ENCODE measurements at regions of chr15 and their contacts with region 1.

Region 1: GRCh38 chr15:40253167-40253790 is 14.4 kb downstream of the PAK6 start:
- DNase-seq: no peak
- ATAC-seq: no peak
- H3K4me3 ChIP-seq: peak overlapping the region; percentile 48 to 52
- H3K27ac ChIP-seq: peak overlapping the region; percentile 41; the same call in 1 of the 2 replicates
- H3K4me1 ChIP-seq: peaks cover 28% of the 10 kb centered on the region
- H3K27me3 ChIP-seq: no peaks in the 10 kb centered on the region; the same call in 1 of the 2 replicates
- CTCF ChIP-seq: no peak

Region 2: GRCh38 chr15:40069178-40070165 is 183.8 kb before region 1 on chr15:
- CTCF ChIA-PET with region 1: no interaction called
- POLR2A ChIA-PET with region 1: no interaction called
- in situ Hi-C with region 1: no loop called
- intact Hi-C with region 1: no loop called
- DNase-seq: peak; percentile 71
- ATAC-seq: peak; percentile 92
- H3K4me3 ChIP-seq: peak overlapping the region in 1 of 2 experiments; percentile 25; a peak in 1 of 4 replicates
- H3K27ac ChIP-seq: peak overlapping the region; percentile 81
- H3K4me1 ChIP-seq: peaks cover 46% of the 10 kb centered on the region
- H3K27me3 ChIP-seq: no peaks in the 10 kb centered on the region
- CTCF ChIP-seq: no peak

Region 3: DNA sequence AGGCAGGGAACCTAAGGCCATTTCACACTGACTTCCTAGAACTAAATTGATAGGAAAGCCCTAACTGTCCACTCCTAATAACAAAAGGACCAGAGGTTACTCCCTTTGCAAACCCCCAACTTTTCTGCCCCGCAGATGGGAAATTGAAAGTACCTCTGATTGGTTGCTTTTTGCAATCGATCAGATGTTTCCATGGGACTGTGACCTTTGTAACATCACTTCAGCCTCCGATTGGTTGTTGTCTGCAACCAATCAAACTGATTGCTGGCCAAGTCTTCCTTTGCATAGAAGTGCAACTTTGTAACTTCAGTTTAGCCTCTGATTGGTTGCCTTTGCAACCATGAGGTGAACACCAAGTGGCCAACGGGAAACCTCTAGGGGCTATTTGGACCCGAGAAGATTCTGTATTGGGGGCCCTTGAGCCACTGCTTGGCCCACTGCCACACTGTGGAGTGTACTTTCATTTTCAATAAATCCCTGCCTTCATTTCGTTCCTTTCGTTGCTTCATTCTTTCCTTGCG is 329.5 kb after region 1 on chr15:
- CTCF ChIA-PET with region 1: interaction called, 11 read pairs
- POLR2A ChIA-PET with region 1: no interaction called
- in situ Hi-C with region 1: no loop called
- intact Hi-C with region 1: no loop called
- DNase-seq: no peak
- ATAC-seq: peak; percentile 86
- H3K4me3 ChIP-seq: peak overlapping the region; percentile 52 to 83
- H3K27ac ChIP-seq: peak overlapping the region; percentile 89
- H3K4me1 ChIP-seq: 0 out of 2 replicates have a peak, but pooled peaks cover 4% of the 10 kb centered on the region
- H3K27me3 ChIP-seq: no peaks in the 10 kb centered on the region
- CTCF ChIP-seq: no peak